Right cardiac atrium (tissue), 5 donors: ENCODE measurements at regions of chr6 and their contacts with region 1.

Region 1: DNA sequence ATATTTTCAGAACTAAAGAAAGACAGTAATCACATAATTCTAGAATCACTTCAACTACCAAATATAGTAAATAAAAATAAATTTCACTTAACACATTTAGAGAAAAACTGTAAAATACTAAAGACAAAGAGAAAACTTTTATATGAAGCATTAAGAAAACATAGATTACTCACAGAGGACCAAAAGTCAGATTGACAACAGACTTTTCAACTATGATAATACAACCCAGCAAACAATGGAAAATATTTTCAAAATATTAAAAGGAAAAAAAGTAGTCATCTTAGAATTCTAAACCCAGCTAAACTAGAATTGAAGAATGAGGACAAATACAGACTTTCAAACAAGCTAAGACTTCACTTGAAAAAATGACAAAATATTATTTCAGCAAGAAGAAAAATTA is 164.8 kb upstream of the ARID1B start:
- DNase-seq: no peak
- ATAC-seq: no peak
- H3K4me3 ChIP-seq: no peak overlapping the region
- H3K27ac ChIP-seq: no peak overlapping the region
- H3K4me1 ChIP-seq: peaks cover 2% of the 10 kb centered on the region
- H3K27me3 ChIP-seq: no peaks in the 10 kb centered on the region

Region 2: DNA sequence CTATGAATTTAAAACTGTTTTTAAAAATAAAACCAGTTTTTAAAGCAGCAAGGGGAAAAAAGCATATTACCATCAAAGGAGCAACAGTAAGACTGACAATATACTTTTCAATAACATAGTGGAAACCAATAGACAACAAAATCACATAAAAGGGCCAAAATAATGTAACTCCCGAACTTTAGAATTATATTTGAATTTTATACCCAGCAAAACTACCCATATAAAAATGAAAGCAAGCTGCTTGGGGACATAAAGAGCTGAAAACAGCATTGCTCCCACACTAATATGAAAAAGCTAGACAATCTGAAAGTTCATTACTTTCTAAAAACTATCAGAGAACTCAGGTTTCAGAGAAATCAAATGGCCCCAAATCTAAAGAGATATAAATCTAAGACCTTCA is 34.6 kb before region 1 on chr6:
- intact Hi-C with region 1: no loop called
- DNase-seq: no peak
- ATAC-seq: no peak
- H3K4me3 ChIP-seq: no peak overlapping the region
- H3K27ac ChIP-seq: no peak overlapping the region
- H3K4me1 ChIP-seq: no peaks in the 10 kb centered on the region
- H3K27me3 ChIP-seq: no peaks in the 10 kb centered on the region

Region 3: DNA sequence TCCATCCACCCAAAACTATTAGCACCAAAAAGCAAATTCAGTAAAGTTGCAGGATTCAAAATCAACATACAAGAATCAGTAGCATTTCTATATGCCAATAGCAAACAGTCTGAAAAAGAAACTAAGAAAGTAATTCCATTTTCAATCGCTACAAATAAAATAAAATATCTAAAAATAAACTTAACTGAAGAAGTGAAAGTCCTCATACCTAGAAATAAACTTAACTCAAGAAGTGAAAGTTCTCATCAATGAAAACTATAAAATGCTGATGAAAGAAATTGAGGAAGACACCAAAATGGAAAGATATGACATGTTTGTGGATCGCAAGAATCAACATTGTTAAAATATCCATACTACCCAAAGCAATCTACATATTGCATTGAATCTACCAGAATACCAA is 61.8 kb after region 1 on chr6:
- intact Hi-C with region 1: loop called in 1 of 4 experiments (anchors 5 kb)
- DNase-seq: no peak
- ATAC-seq: no peak
- H3K4me3 ChIP-seq: no peak overlapping the region
- H3K27ac ChIP-seq: no peak overlapping the region
- H3K4me1 ChIP-seq: no peaks in the 10 kb centered on the region
- H3K27me3 ChIP-seq: no peaks in the 10 kb centered on the region

Region 4: DNA sequence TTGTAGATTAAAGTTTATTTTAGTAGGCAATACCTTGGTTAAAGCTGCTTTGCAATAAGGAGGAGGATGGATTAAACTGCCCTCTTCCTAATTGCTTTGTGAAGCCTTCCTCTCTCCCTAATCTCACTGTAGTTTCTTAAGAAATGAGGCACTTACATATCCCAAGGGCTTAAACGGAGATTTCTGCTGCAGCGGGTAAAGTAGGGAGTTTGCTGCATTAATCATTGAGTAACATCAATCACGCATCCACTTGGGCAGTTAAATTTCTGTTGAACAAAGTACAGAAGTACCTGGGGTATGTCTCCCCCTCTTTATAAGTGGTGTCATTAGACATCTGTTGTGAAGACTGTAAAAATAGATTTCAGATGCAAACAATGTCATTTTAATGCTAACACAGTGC is 135.4 kb after region 1 on chr6:
- intact Hi-C with region 1: no loop called
- DNase-seq: no peak
- ATAC-seq: no peak
- H3K4me3 ChIP-seq: no peak overlapping the region
- H3K27ac ChIP-seq: no peak overlapping the region
- H3K4me1 ChIP-seq: no peaks in the 10 kb centered on the region
- H3K27me3 ChIP-seq: no peaks in the 10 kb centered on the region